Activated CD4-positive, alpha-beta T cell treated with anti-CD3 and anti-CD28 coated beads, Interleukin-2, amount 10 ng/mL, durations not matched to agents 7 days and 5 days (primary cell): ENCODE measurements at regions of chr16 and their contacts with region 1.

Region 1: DNA sequence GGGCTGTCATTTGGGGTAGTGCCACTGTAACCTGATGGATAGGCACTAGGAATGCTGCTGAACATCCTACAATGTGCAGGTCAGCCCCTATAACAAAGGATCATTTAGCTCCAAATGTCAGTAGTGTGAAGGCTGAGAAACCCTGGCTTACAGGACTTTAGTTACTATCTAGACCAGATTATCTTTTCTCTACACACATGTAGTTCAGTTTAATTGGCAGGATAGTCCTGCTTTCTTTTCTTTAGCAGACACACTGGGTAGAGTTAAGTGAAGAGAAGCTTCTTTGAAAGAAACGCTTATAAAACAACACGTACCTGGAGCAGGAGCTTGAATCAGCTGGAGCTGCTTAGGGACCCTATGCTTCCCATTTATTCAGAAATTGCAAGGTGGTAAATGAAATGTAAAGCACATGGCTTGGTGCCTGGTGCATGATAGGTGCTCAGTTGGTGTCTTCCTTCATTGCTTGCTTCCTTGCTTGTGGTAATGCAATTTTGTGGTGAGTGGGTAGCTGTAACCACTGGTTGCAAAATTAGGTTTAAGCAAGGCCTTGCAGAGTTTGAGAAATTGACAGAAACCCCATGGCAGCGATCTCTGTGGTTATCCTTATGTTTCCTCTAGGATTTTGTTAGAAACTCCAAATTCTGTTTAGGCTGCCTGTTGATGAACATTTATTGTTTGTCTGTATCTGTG is 9.4 kb downstream of the METTL9 start:
- DNase-seq: peak; percentile 66
- H3K4me3 Mint-ChIP-seq: no peak overlapping the region
- H3K27ac Mint-ChIP-seq: peak overlapping the region; percentile 41
- H3K4me1 Mint-ChIP-seq: peaks cover 72% of the 10 kb centered on the region
- H3K27me3 Mint-ChIP-seq: no peaks in the 10 kb centered on the region

Region 2: DNA sequence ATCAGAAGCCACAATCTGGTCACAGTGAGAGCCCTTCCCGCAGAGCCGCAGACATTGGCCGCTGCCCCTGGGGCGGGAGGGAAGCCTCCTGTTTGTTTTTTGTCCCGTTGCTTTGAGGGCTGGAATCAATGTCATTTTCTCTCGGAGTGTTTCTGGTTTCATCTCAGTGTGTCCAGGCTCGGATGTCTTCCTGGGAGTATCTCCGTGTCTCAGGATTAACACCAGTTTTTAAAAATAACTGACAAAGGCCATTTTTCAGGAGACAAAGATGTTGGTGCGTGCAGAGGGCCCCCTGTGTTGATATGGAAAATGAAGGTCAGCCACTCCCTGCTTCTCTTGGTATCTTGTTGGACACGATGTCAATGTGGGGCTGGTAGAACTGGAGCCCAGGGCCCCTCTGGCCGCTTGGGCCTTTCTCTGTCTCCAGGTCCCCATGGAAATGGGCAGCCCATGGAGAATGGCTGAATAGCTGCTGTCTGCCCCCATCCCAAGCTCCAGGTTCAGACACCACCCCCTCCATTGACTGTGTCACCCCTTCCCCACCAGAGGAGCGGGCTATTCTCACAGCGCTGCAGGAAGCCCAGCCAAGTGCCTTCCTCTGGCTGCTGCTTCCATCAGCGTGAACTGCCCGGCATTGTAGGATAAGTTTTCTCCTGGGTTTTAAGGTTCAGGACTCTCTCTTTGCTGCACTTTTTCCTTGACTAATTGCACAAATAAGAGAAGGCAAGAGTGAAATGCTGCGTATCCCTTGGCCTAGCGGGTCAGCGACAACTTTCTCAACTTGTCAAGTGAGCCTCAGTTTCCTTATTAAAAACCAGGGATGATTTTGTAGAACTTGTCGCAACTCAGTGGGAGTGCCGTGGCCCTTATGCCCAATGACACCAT is 81.6 kb before region 1 on chr16:
- CTCF ChIA-PET with region 1: no interaction called
- POLR2A ChIA-PET with region 1: no interaction called
- DNase-seq: no peak
- H3K4me3 Mint-ChIP-seq: no peak overlapping the region
- H3K27ac Mint-ChIP-seq: no peak overlapping the region
- H3K4me1 Mint-ChIP-seq: no peaks in the 10 kb centered on the region
- H3K27me3 Mint-ChIP-seq: peaks cover 6% of the 10 kb centered on the region

Region 3: DNA sequence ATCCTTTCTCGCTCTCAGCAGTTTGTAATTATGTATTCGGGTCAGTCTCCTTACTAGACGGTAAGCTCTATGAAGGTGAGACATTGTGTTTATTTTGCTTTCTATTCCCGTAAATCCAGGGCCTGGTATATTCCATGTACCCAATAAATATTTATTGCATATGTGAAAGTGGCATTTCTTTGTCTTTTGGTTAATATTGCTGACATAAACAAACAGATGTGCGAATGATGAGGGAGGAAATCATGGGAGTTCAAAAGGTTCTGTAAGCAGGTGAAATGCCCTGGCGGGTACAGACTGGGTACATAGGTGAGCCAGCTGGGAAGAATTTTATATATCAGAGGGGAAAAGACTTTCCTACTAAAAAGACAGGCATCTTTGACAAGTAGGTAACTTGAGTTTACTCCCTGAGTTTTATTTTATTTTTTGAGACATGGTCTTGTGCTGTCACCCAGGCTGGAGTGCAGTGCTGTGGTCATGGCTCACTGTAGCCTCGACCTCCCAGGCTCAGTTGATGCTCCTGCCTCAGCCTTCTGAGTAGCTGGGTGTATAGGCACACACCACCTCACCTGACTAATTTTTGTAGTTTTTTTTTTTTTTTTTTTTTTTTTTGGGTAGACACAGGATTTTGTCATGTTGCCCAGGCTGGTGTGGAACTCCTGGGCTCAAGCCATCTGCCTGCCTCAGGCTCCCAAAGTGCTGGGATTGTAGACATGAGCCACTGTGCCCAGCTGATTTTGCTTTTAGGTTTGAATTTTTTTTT is 15.1 kb before region 1 on chr16:
- CTCF ChIA-PET with region 1: interaction called, 10 read pairs
- POLR2A ChIA-PET with region 1: no interaction called
- DNase-seq: no peak
- H3K4me3 Mint-ChIP-seq: no peak overlapping the region
- H3K27ac Mint-ChIP-seq: no peak overlapping the region
- H3K4me1 Mint-ChIP-seq: peaks cover 22% of the 10 kb centered on the region
- H3K27me3 Mint-ChIP-seq: peaks cover 1% of the 10 kb centered on the region